Left cardiac atrium (tissue), 4 donors: ENCODE measurements at regions of chr7 and their contacts with region 1.

Region 1: GRCh38 chr7:51357821-51358220 is 41.2 kb upstream of the COBL start:
- DNase-seq: no peak
- ATAC-seq: no peak

Region 2: DNA sequence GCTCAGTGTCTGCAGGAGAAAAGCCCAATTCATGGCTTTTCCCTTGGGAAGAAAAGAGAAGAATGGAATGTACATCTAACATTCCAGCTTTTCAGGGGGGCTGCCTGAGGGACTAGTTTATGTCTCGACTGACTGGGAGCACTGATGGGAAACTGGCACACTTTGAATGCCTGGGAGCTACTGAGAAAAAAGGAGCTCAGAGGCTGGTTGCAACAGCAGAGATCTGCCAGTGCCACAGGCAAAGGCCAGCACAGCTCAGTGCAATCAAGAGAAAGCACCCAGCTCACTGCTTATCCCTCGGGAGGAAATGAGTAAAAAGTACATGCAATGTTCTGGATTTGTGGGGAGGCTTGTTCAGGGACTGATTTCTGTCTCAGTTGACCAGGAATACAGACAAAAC is 267.4 kb before region 1 on chr7:
- intact Hi-C with region 1: no loop called
- DNase-seq: no peak
- ATAC-seq: no peak

Region 3: DNA sequence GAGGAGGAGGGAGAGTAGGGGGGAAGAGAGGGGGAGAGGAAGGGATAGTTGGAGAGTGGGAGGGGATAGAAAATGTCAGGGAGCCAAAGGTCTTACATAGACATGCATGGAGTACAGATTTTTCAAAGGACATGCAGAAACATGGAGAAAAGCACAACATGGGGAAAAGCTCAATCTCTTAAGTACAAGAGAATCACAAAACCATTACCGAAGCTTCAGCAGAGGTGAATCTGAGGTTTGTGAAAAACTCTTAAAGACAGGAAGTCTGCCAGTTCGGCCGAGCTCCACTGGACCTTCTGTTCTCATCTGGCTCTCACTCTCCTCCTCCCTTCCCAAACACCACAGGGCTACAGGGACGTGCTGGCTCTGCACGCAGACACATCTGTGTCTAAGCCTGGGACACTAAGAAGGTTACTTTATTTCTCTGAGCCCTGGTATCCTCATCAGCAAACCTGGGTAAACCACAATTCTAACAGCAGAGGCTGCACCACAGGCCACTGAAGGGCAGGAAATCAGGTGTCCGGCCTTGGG is 175.1 kb before region 1 on chr7:
- intact Hi-C with region 1: loop called in 1 of 2 experiments (anchors 5 kb)
- DNase-seq: no peak
- ATAC-seq: peak; percentile 44 to 55

Region 4: GRCh38 chr7:51255536-51256208 is 102.1 kb before region 1 on chr7:
- intact Hi-C with region 1: loop called (anchors 5 to 10 kb)
- DNase-seq: no peak
- ATAC-seq: peak; percentile 35 to 77

Region 5: GRCh38 chr7:51299391-51300133 is 58.3 kb before region 1 on chr7:
- intact Hi-C with region 1: loop called in 1 of 2 experiments (anchors 5 kb)
- DNase-seq: no peak
- ATAC-seq: no peak

Region 6: DNA sequence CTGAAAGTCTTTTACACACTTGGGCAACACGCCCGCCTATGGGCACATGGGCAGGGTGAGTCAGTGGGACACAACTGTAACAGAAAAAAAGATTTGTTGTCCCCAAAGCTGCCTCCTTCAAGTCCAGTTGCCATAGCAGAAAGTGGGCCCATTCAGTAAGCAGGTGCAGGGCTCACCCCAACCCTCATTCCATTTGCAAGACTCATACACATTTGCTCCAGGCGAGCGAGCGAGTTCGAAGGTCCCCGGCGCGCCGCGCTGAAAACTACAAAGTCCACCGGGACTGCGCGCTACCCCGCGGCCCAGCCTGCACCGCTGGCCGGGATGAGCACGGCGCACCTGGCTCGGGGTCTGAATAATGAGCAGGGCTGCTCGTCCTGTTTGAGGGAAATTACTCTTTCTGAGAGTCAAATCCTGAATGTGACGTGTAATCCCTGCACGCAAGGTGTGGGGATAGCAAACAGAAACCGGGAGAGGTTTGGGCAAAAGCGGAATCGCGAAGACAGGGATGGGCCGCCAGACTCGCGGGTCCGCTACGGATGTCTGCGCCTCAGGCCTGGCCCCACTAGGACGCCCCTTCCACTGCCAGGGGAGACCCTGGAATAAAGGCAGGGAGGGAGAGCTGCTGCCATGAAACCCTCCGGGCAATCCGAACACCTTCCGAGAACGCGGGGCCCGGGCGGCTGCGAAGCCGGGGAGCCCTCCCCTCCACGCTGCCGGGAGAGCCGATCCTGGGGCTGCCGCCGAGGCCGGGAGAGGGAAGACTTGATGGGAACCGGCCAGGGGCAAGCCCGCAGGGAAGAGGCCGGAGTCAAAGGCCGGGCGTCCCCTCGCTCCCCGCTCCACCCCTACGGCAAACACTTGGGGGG is 42.2 kb before region 1 on chr7:
- intact Hi-C with region 1: loop called in 1 of 2 experiments (anchors 5 kb)
- DNase-seq: no peak
- ATAC-seq: peak; percentile 43 to 63